MCF 10A (cell line): ENCODE measurements at regions of chr11 and their contacts with region 1.

Region 1: DNA sequence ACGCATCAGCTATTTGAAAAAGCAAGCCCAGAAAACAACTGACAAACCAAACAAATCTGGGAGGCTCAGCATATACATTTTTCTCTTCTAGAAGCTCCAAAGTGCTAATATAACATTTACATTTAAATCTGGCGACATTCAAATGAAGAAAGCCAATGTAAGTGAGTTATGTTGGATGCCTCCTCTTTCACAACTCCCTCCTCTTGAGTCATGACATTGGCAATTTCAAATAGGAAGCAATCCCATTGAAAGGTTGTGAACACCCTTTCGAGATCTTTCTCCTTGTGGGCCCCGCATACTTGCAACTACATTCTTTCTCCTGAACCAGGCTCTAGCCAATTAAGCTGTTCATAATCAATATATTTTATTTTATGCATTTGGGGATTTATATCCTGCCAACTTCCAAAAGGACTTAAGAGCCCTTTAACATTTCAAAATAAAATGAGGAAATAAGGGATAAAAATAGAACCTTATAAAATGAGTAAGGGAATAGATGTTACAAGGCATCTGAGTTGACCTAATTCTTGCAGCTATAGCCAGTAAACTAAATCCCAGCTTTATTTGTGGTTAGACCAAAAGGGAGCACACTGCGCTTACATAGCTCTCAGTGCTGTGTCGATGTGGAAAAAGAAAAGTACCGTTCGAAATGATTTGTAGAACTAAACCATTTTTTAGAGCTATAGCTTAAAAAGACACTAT is 129.5 kb upstream of the SESN3 start:
- DNase-seq: peak; percentile 20
- H3K4me3 Mint-ChIP-seq: no peak overlapping the region
- H3K27ac Mint-ChIP-seq: no peak overlapping the region
- H3K4me1 Mint-ChIP-seq: peaks cover 27% of the 10 kb centered on the region
- H3K27me3 Mint-ChIP-seq: no peaks in the 10 kb centered on the region
- CTCF ChIP-seq: no peak

Region 2: DNA sequence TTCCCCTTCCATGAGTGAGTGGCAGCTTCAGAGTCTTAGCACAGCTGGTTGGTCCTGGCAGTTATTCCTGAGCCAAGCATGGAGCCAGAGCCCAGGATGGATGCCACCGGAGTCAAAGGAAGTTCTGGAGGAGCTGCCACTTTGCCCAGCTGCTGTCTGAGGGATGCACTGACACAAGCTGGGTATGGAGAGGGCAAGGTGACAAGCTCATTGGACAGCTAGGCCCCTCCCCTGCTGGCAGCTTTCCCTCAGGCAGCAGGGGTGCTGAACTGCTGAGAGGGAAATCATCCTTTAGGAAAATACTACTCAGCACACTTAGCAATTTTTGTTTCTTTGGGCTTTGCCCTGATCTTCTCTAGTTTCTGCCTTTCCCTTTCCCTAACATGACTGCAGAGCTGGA is 30.2 kb before region 1 on chr11:
- CTCF ChIA-PET with region 1: no interaction called
- POLR2A ChIA-PET with region 1: no interaction called
- intact Hi-C with region 1: no loop called
- DNase-seq: no peak
- H3K4me3 Mint-ChIP-seq: no peak overlapping the region
- H3K27ac Mint-ChIP-seq: no peak overlapping the region
- H3K4me1 Mint-ChIP-seq: no peaks in the 10 kb centered on the region
- H3K27me3 Mint-ChIP-seq: no peaks in the 10 kb centered on the region
- CTCF ChIP-seq: no peak

Region 3: GRCh38 chr11:95371153-95371552 is 10.6 kb after region 1 on chr11:
- CTCF ChIA-PET with region 1: interaction called, 3 read pairs
- POLR2A ChIA-PET with region 1: interaction called, 11 read pairs
- intact Hi-C with region 1: no loop called
- DNase-seq: no peak
- H3K4me3 Mint-ChIP-seq: no peak overlapping the region
- H3K27ac Mint-ChIP-seq: no peak overlapping the region
- H3K4me1 Mint-ChIP-seq: no peaks in the 10 kb centered on the region
- H3K27me3 Mint-ChIP-seq: no peaks in the 10 kb centered on the region
- CTCF ChIP-seq: no peak